ENCODE measurements at regions of chr17 and their contacts with region 1.

Region 1: GRCh38 chr17:57671667-57672632 is 73.1 kb downstream of the CCDC182 start:
- DNase-seq: peak; percentile 92
- H3K4me3 ChIP-seq: no peak overlapping the region
- H3K27ac ChIP-seq: no peak overlapping the region
- H3K4me1 ChIP-seq: peaks cover 3 to 29% (median 21%) of the 10 kb centered on the region in 4 donors
- H3K27me3 ChIP-seq: no peaks in the 10 kb centered on the region
- CTCF ChIP-seq: peak; percentile 87 to 92 (median 88)
- EP300 ChIP-seq: no peak
- POLR2A ChIP-seq: no peak

Region 2: DNA sequence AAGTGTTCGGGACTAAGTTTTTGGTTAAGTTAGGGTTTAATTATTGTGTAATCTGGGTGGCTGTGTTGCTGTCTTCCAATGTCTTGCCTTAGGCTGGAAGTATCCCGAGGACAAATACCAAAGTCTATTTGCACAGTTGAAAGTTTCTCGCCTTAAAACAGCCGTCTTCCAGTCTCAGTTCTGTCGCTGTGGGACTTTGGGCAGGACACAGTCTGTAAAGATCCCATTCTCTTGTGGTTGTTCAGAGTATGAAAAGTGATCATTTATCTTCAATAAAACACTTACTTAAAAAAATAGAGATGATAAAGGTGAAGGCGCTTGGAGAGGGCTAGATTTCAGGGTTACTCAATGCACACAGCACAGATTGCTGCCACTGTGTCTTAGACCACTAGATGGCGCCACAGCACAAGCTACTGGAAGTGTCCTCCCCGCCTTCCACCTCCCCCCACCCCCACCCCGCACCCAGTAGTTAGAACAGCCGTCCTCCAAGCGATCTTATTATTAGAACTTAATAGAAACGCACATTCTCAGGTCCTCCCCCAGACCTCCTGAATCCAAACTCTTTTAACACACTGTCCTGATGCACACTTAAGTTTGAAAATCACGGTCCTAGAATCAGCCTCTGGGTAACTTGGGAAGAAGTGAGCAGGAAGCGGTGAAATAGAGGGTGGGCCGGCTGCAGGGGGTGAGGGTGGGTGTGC is 541.0 kb before region 1 on chr17:
- intact Hi-C with region 1: loop called (anchors 10 kb)
- DNase-seq: peak; percentile 94
- H3K4me3 ChIP-seq: peak overlapping the region; percentile 17 to 26 (median 24)
- H3K27ac ChIP-seq: no peak overlapping the region
- H3K4me1 ChIP-seq: peaks cover 0 to 7% (median 3%) of the 10 kb centered on the region in 4 donors
- H3K27me3 ChIP-seq: no peaks in the 10 kb centered on the region
- CTCF ChIP-seq: peak in 2 of 3 experiments; percentile 74 to 87
- EP300 ChIP-seq: no peak
- POLR2A ChIP-seq: no peak

Region 3: DNA sequence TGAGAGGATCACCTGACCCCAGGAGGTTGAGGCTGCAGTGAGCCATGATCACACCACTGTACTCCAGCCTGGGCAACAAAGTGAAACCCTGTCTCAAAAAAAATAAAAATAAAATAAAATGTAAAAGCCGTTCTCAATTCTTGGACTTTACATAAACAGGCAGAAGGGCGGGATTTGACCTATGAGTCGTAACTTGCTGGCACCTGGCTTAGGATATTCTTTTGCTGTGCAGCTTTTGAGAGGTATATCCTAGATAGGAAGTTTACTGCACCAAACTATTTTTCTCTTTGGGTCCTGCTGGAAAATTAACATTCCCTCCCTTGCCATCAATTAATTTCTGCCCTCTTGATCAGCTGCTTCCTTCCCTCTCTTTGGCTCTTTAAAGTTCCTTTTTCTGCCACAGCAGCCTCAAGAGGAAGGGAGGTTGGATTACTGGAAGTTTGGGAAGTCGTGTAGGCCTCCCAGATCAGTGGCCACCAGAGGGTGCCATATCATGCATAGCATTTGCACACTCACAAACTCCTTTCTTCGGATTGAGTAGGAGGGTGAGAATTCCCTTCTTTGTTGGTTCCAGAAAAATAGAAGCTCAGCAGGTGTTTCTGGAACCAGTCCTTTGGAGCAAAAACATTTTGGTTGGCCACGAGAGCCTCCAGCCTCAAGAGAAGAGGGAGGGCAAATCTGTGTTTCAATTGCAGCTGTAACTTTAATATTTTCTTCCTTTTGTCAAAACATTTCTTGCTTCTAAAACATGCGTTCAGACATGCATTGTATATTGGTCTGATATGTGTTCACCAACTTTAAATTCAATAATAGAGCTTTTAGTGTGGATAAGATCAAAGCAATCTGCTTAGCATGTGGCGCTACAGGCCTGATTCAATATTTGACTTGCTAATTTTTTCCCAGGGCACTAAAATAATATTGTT is 74.2 kb before region 1 on chr17:
- intact Hi-C with region 1: loop called (anchors 5 kb)
- DNase-seq: no peak
- H3K4me3 ChIP-seq: no peak overlapping the region
- H3K27ac ChIP-seq: no peak overlapping the region
- H3K4me1 ChIP-seq: peaks cover 4 to 9% (median 9%) of the 10 kb centered on the region in 4 donors
- H3K27me3 ChIP-seq: no peaks in the 10 kb centered on the region
- CTCF ChIP-seq: peak; percentile 78 to 87 (median 80)
- EP300 ChIP-seq: no peak
- POLR2A ChIP-seq: no peak

Region 4: DNA sequence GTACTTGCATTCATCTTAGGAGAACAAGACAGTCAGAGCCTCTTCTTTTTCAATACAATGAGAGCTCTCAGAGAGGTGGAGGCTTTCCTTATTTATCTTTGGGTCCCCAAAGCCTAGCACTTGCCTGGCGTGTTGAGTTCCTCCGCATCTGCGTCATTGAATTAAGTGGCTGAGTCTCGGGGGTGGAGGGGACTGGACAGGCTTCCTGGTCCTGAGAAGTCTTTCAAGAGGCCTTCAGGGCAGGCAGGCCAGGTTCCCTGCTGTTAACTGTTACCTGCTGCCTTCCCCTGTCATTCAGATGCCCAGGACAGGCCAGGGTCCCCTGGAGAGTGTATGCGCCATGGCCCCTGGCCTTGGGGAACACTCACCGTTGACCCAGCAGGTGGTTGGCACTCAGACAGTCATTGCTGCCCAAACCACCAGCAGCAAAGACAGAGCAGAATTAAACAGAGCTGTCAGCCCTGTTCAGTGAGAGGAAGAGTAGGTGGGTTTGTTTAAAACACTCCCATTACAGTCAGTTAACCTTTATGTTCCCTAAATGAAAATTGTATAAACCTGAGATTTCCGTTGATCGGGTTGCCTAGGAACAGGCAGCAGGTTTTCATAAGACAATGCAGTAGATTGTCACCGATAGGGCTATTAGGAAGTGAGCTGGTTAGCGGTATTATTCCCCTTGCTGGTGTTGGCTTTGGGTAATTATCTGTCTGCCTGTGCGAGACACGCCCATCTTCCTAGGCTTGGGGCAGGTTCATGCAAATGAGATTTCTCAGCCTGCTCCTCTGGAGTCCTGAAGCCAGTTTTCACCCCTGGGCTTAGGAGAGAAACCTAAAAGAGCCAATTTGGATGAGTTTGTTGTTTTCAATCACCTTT is 59.5 kb before region 1 on chr17:
- intact Hi-C with region 1: no loop called
- DNase-seq: no peak
- H3K4me3 ChIP-seq: no peak overlapping the region
- H3K27ac ChIP-seq: no peak overlapping the region
- H3K4me1 ChIP-seq: peaks cover 0 to 8% (median 6%) of the 10 kb centered on the region in 4 donors
- H3K27me3 ChIP-seq: no peaks in the 10 kb centered on the region
- CTCF ChIP-seq: no peak
- EP300 ChIP-seq: no peak
- POLR2A ChIP-seq: no peak

Region 5: DNA sequence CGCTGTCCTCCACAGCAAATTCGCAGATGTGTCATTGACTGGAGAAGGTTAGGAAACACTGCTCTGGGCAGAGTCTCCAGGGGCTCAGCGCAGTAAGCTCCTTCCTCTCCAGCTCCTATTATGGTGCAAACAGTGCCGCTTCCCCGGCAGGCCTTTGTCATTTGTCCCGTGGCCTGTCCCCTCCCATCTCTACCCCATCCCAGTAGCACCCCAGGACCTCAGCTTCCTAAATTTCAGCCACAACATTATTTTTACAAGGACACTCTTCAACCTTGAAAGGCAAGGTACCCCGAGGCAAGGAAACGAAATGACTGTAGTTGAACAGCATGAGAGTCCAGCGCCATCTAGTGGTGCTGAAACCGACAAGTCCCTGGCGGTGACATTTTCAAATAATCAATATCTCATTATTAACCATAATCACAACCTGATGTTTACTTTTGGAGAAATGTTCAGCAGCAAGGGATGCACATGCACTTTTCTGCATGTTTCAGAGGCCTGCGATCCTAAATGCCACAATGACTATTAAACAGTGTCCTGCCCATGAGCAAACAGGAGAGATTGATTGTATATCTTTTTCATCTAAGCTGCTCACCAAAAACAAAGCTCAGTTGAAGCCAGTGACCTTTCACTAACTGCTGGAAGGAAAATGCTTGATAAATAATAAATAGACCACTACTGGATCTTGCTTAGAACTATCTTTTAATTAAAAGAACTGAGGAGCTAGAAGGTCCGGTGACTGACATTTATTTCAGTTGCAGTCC is 161.4 kb after region 1 on chr17:
- intact Hi-C with region 1: no loop called
- DNase-seq: no peak
- H3K4me3 ChIP-seq: peak overlapping the region; percentile 47 to 60 (median 52)
- H3K27ac ChIP-seq: peak overlapping the region; percentile 80 to 89 (median 83)
- H3K4me1 ChIP-seq: peaks cover 33 to 46% (median 37%) of the 10 kb centered on the region in 4 donors
- H3K27me3 ChIP-seq: no peaks in the 10 kb centered on the region
- CTCF ChIP-seq: peak; percentile 88 to 91 (median 89)
- EP300 ChIP-seq: no peak
- POLR2A ChIP-seq: no peak

Measured in esophagus muscularis mucosa (tissue), 4 donors.